K562 (cell line): ENCODE measurements at regions of chr11 and their contacts with region 1.

Region 1: DNA sequence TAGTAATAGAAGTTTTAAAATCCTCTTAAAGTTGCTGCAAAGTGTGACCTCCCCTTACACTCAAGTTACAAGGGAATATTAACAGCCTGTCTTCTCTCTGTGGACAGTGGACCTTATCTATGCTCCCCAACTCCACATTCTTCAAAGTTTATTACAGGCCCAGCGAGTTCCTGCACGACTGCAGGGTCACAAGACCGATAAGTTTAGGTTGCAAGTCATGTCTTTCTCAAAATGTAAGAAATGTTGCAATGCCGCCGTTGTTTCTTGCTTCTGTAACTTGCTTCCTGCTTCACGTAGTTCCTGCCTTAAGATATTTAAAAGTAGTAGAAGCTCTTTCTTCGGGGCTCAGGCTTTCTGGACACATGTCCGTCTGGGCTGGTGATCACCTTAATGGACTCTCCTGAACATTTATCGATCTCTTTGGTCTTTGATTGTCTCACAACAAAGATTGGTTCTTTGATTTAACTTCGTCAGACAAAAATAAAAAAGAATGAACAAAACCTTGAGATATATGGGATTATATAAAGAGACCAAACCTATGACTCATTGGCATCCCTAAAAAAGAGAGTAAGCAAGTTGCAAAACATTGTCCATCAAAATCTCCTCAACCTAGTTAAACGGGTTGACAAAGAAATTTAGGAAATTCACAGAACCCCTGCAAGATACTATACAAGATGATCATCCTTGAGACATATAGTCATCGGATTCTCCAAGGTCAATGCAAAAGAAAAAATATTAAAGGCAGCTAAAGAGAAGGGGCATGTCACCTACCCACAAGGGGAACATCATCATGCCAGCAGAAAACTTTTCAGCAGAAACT is 45.4 kb upstream of the GLYAT start:
- DNase-seq: peak in 2 of 4 experiments; percentile 62 to 93
- ATAC-seq: peak; percentile 72
- H3K4me3 ChIP-seq: no peak overlapping the region
- H3K27ac ChIP-seq: peak overlapping the region; percentile 81
- H3K4me1 ChIP-seq: peaks cover 5 to 55% of the 10 kb centered on the region in 2 experiments
- H3K27me3 ChIP-seq: no peaks in the 10 kb centered on the region
- CTCF ChIP-seq: no peak
- EP300 ChIP-seq: peak; percentile 97
- POLR2A ChIP-seq: no peak; the same call in 1 of the 2 replicates
- RAD21 ChIP-seq: peak; percentile 12 to 37; a peak in 2 of 4 replicates

Region 2: DNA sequence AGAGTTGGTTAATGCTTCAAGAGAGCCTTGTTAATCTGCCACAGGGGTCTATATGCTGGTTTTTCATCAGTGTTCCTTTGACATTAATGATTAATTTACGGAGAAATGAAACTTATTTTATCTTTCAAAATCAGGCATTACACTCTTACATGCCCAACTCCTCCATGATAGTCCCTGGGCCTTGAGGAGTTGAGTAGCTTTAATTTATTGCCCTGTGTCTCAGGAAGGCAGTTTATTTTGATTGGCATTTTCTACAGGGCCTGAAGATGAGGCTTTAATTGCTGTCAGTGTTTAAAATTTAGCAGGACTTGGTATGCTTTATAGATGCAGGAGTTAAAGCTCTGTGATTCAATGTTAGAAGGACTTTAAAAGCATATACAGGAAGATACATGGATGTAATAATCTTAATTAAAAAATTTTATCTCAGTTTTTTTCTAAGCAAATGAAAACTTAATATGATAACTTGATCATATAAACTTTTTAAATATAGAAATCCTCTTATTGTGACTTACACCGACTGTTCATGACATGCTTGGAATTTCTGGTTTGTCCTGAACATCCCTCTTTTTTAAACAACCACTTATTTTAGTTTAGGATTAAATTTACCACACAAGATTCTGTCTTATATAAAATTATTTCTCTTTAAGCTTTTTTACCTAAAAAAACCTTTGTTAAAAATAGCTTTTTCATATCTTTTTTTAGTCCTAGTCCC is 57.5 kb before region 1 on chr11:
- CTCF ChIA-PET with region 1: no interaction called
- POLR2A ChIA-PET with region 1: no interaction called
- in situ Hi-C with region 1: no loop called
- intact Hi-C with region 1: loop called (anchors 5 kb)
- DNase-seq: no peak
- ATAC-seq: no peak
- H3K4me3 ChIP-seq: no peak overlapping the region
- H3K27ac ChIP-seq: no peak overlapping the region
- H3K4me1 ChIP-seq: no peaks in the 10 kb centered on the region
- H3K27me3 ChIP-seq: no peaks in the 10 kb centered on the region
- CTCF ChIP-seq: no peak
- EP300 ChIP-seq: no peak
- POLR2A ChIP-seq: no peak
- RAD21 ChIP-seq: no peak